BJ (cell line): ENCODE measurements at regions of chr13 and their contacts with region 1.

Region 1: GRCh38 chr13:49792550-49793324 is at the start of gene KPNA3:
- DNase-seq: peak; percentile 78
- H3K4me3 ChIP-seq: peak within 1 kb of the TSS; percentile 50
- H3K27me3 ChIP-seq: no peaks in the 10 kb centered on the region
- CTCF ChIP-seq: no peak
- polyA plus RNA-seq, gene KPNA3: 14.9 and 28.1 TPM in 2 replicates

Region 2: GRCh38 chr13:49643035-49643646 is 149.6 kb before region 1 on chr13:
- CTCF ChIA-PET with region 1: no interaction called
- POLR2A ChIA-PET with region 1: interaction called, 17 read pairs
- DNase-seq: no peak
- H3K4me3 ChIP-seq: no peak overlapping the region
- H3K27me3 ChIP-seq: no peaks in the 10 kb centered on the region
- CTCF ChIP-seq: no peak

Region 3: DNA sequence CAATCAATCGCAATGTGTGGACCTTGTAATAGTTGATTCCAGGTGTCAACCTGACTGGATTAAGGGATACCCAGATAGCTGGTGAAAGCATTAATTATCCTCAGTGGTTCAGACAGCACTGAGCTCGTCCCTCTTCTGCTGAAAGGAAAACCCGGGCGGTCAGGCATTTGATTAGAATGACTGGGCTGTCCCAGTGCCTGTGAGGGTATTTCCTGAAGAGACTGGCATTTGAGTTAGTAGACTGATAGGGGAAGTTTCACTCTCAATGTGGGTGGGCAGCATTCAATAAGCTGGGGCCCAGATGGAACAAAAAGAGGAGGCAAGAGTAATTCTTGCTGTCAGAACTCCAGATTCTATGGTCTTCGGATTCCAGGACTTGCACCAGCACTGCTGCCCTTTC is 32.2 kb before region 1 on chr13:
- CTCF ChIA-PET with region 1: no interaction called
- POLR2A ChIA-PET with region 1: interaction called, 14 read pairs
- DNase-seq: no peak
- H3K4me3 ChIP-seq: no peak overlapping the region
- H3K27me3 ChIP-seq: no peaks in the 10 kb centered on the region
- CTCF ChIP-seq: no peak